Heart right ventricle (tissue), 16 donors: ENCODE measurements at regions of chr21 and their contacts with region 1.

Region 1: GRCh38 chr21:35932232-35932911 is 128.0 kb downstream of the SETD4 start:
- DNase-seq: peak; percentile 27 to 83
- ATAC-seq: peak; percentile 73 to 97 (median 92)
- H3K4me3 ChIP-seq: peak overlapping the region in 1 of 10 donors; percentile 0
- H3K27ac ChIP-seq: peak overlapping the region in 9 of 10 donors; percentile 14 to 93 (median 86)
- H3K4me1 ChIP-seq: peaks cover 0 to 29% (median 22%) of the 10 kb centered on the region in 9 donors
- H3K27me3 ChIP-seq: no peaks in the 10 kb centered on the region
- CTCF ChIP-seq: no peak

Region 2: GRCh38 chr21:34693192-34693810 is 1239.1 kb before region 1 on chr21:
- intact Hi-C with region 1: loop called in 2 of 10 experiments (anchors 10 kb)
- DNase-seq: peak in 1 of 2 donors; percentile 29
- ATAC-seq: peak in 1 of 8 donors; percentile 26
- H3K4me3 ChIP-seq: no peak overlapping the region
- H3K27ac ChIP-seq: no peak overlapping the region
- H3K4me1 ChIP-seq: peaks cover 0 to 17% (median 5%) of the 10 kb centered on the region in 9 donors
- H3K27me3 ChIP-seq: peaks cover 0 to 16% (median 0%) of the 10 kb centered on the region in 7 donors
- CTCF ChIP-seq: peak; percentile 56 to 85 (median 76)

Region 3: GRCh38 chr21:35779690-35780570 is 152.4 kb before region 1 on chr21:
- intact Hi-C with region 1: loop called in 1 of 10 experiments (anchors 10 kb)
- DNase-seq: no peak
- ATAC-seq: peak in 4 of 8 donors; percentile 40 to 48 (median 44)
- H3K4me3 ChIP-seq: no peak overlapping the region
- H3K27ac ChIP-seq: peak overlapping the region in 4 of 10 donors; percentile 20 to 56 (median 34)
- H3K4me1 ChIP-seq: peaks cover 0 to 18% (median 9%) of the 10 kb centered on the region in 9 donors
- H3K27me3 ChIP-seq: peaks cover 0 to 4% (median 0%) of the 10 kb centered on the region in 7 donors
- CTCF ChIP-seq: no peak

Region 4: GRCh38 chr21:35840197-35840799 is 92.1 kb before region 1 on chr21:
- intact Hi-C with region 1: loop called in 2 of 10 experiments (anchors 5 to 10 kb)
- DNase-seq: peak in 1 of 2 donors; percentile 67
- ATAC-seq: peak in 7 of 8 donors; percentile 42 to 81 (median 63)
- H3K4me3 ChIP-seq: no peak overlapping the region
- H3K27ac ChIP-seq: no peak overlapping the region
- H3K4me1 ChIP-seq: peaks cover 0 to 12% (median 2%) of the 10 kb centered on the region in 9 donors
- H3K27me3 ChIP-seq: peaks cover 0 to 5% (median 0%) of the 10 kb centered on the region in 7 donors
- CTCF ChIP-seq: peak; percentile 65 to 91 (median 83)